Activated CD8-positive, alpha-beta T cell treated with anti-CD3 and anti-CD28 coated beads, Interleukin-2, amount 10 ng/mL, durations not matched to agents 7 days and 5 days (primary cell): ENCODE measurements at regions of chr19 and their contacts with region 1.

Region 1: DNA sequence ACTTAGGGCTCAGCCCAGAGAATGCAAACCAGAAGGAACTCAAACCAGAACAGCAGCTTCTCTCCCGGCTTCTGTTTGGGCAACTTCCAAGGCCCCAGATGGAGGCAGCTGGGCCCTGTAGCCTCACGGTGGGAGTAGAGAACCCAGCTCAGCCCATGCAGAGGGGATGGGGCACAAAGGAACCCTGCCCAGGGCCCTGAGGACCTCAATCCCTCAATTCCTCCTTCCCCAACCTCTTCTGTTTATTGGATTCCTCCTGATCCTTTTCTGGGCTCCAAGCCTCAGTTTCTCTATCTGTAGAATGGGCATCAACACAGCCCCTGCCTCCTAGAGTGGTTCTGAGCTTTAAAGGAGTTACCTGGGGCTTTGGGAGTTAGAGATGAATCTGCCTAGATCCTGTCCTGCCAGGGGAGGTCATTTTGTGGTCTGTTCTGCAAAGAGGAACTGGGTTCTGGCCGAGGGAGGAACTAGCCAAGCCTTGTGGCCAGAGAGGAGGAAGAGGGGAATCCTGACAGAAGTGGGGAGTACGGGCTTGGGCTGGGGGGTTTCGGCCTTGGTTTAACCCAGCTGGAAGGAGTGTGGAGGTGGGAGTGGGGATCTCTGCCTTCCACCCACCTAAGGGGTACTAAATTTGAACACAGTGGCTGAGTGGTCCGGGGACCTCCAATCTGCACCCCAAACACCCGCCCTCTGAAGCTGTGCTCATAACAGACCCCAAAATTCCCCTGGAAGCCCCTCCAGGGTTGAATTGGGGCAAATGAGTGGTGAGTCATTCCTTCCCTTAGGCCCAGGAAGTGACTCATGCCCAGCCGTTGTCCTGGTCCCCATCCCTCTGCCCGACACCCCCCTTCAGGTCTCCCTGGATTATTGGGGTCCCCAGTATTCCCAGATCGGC is 2.7 kb downstream of the ADGRE5 start:
- DNase-seq: peak; percentile 70
- ATAC-seq: peak; percentile 10
- H3K4me3 Mint-ChIP-seq: peak overlapping the region; percentile 86
- H3K27ac Mint-ChIP-seq: peak overlapping the region; percentile 89
- H3K4me1 Mint-ChIP-seq: peaks cover 45% of the 10 kb centered on the region
- H3K27me3 Mint-ChIP-seq: no peaks in the 10 kb centered on the region

Region 2: DNA sequence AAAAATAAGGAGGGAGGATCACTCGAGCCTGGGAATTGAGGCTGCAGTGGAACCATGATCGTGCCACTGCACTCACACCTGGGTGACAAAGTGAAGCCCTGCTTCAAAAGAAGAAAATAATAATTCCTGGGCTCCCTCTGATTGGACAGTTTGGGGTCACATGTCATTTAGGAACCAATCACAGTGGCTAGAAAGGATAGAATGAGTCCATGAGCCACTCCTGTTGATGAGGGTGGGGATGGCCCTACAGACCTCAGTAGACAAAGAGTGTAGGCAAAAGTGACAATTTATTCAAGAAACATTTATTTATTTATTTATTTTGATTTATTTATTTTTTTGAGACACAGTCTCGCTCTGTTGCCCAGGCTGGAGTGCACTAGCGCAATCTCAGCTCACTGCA is 29.5 kb before region 1 on chr19:
- CTCF ChIA-PET with region 1: interaction called, 20 read pairs
- POLR2A ChIA-PET with region 1: interaction called, 415 read pairs
- DNase-seq: no peak
- ATAC-seq: no peak
- H3K4me3 Mint-ChIP-seq: no peak overlapping the region
- H3K27ac Mint-ChIP-seq: no peak overlapping the region
- H3K4me1 Mint-ChIP-seq: peaks cover 37% of the 10 kb centered on the region
- H3K27me3 Mint-ChIP-seq: no peaks in the 10 kb centered on the region

Region 3: GRCh38 chr19:14366498-14366915 is 17.4 kb before region 1 on chr19:
- CTCF ChIA-PET with region 1: interaction called, 135 read pairs
- POLR2A ChIA-PET with region 1: interaction called, 415 read pairs
- DNase-seq: peak; percentile 92
- ATAC-seq: peak; percentile 38
- H3K4me3 Mint-ChIP-seq: peak overlapping the region; percentile 45
- H3K27ac Mint-ChIP-seq: peak overlapping the region; percentile 86
- H3K4me1 Mint-ChIP-seq: peaks cover 76% of the 10 kb centered on the region
- H3K27me3 Mint-ChIP-seq: no peaks in the 10 kb centered on the region

Region 4: GRCh38 chr19:14419106-14419813 is 35.4 kb after region 1 on chr19 and contains the start of gene DDX39A:
- CTCF ChIA-PET with region 1: no interaction called
- POLR2A ChIA-PET with region 1: interaction called, 15 read pairs
- DNase-seq: peak; percentile 99
- ATAC-seq: peak; percentile 91
- H3K4me3 Mint-ChIP-seq: peak within 1 kb of the TSS; percentile 94
- H3K27ac Mint-ChIP-seq: peak within 1 kb of the TSS; percentile 99
- H3K4me1 Mint-ChIP-seq: peaks cover 41% of the 10 kb centered on the region
- H3K27me3 Mint-ChIP-seq: no peaks in the 10 kb centered on the region
- total RNA-seq, gene DDX39A: 309 to 313 TPM